Lower lobe of right lung (tissue), 2 donors: ENCODE measurements at regions of chr10 and their contacts with region 1.

Region 1: GRCh38 chr10:14822879-14823755 is 14.7 kb downstream of the CDNF start:
- DNase-seq: no peak
- ATAC-seq: peak in 1 of 2 donors; percentile 71
- H3K4me3 ChIP-seq: no peak overlapping the region
- H3K27ac ChIP-seq: no peak overlapping the region
- H3K4me1 ChIP-seq: peaks cover 4% of the 10 kb centered on the region
- H3K27me3 ChIP-seq: no peaks in the 10 kb centered on the region
- CTCF ChIP-seq: peak; percentile 64

Region 2: DNA sequence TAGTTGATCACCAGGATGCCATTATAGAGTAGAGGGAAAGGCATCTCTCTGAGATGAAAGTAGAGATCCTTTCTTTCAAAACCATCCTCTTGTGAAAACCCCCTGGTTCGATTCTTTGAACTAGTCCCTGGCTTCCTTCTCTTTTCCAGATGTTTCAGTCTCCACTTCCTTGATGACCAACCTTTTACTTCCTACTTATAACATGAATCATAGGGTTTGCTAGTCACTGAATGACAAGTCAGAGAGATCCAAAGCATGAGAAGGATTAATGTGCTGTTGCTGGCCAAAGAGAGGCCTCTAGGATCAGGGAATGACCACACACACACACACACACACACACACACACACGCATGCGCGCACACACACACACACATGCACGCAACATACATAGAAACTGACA is 331.3 kb before region 1 on chr10:
- intact Hi-C with region 1: loop called (anchors 10 kb)
- DNase-seq: no peak
- ATAC-seq: no peak
- H3K4me3 ChIP-seq: no peak overlapping the region
- H3K27ac ChIP-seq: no peak overlapping the region
- H3K4me1 ChIP-seq: peaks cover 7% of the 10 kb centered on the region
- H3K27me3 ChIP-seq: no peaks in the 10 kb centered on the region
- CTCF ChIP-seq: no peak

Region 3: GRCh38 chr10:14758994-14759664 is 64.0 kb before region 1 on chr10:
- intact Hi-C with region 1: no loop called
- DNase-seq: no peak
- ATAC-seq: no peak
- H3K4me3 ChIP-seq: no peak overlapping the region
- H3K27ac ChIP-seq: no peak overlapping the region
- H3K4me1 ChIP-seq: peaks cover 4% of the 10 kb centered on the region
- H3K27me3 ChIP-seq: no peaks in the 10 kb centered on the region
- CTCF ChIP-seq: no peak